ENCODE measurements at regions of chr19 and their contacts with region 1.

Region 1: GRCh38 chr19:15091901-15092753 is 10.1 kb downstream of the OR1I1 start:
- DNase-seq: peak in 2 of 5 donors; percentile 45 to 51
- H3K4me3 ChIP-seq: no peak overlapping the region
- H3K27ac ChIP-seq: no peak overlapping the region
- H3K4me1 ChIP-seq: no peaks in the 10 kb centered on the region
- H3K27me3 ChIP-seq: no peaks in the 10 kb centered on the region
- CTCF ChIP-seq: peak; percentile 23 to 70 (median 42)
- EP300 ChIP-seq: no peak
- POLR2A ChIP-seq: no peak

Region 2: GRCh38 chr19:15144036-15144646 is 52.0 kb after region 1 on chr19:
- intact Hi-C with region 1: loop called in 1 of 4 experiments (anchors 10 kb)
- DNase-seq: no peak
- H3K4me3 ChIP-seq: no peak overlapping the region
- H3K27ac ChIP-seq: no peak overlapping the region
- H3K4me1 ChIP-seq: no peaks in the 10 kb centered on the region
- H3K27me3 ChIP-seq: no peaks in the 10 kb centered on the region
- CTCF ChIP-seq: no peak
- EP300 ChIP-seq: no peak
- POLR2A ChIP-seq: no peak

Region 3: GRCh38 chr19:15154002-15154612 is 62.0 kb after region 1 on chr19:
- intact Hi-C with region 1: loop called (anchors 5 to 10 kb)
- DNase-seq: no peak
- H3K4me3 ChIP-seq: no peak overlapping the region
- H3K27ac ChIP-seq: no peak overlapping the region
- H3K4me1 ChIP-seq: no peaks in the 10 kb centered on the region
- H3K27me3 ChIP-seq: no peaks in the 10 kb centered on the region
- CTCF ChIP-seq: no peak
- EP300 ChIP-seq: no peak
- POLR2A ChIP-seq: no peak

Region 4: DNA sequence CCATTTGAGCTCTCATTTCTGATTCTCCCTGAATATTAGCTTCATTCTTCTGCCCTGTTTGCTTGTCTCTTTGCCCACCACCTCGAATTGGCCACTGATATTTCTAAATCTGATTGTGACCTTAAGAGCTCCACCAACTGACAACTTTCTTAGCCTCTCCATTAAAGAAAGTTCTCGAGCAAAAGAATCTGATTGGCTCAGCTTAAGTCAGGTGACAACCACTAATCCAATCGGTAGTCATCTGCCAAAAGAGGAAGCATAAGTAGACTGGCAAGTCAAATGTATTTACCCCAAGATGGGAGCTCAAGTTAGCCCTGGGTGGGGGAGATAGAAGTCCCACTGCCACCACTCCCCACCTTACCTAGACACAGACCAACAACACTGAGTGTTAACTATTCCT is 67.1 kb after region 1 on chr19:
- intact Hi-C with region 1: loop called in 3 of 4 experiments (anchors 5 kb)
- DNase-seq: no peak
- H3K4me3 ChIP-seq: no peak overlapping the region
- H3K27ac ChIP-seq: no peak overlapping the region
- H3K4me1 ChIP-seq: no peaks in the 10 kb centered on the region
- H3K27me3 ChIP-seq: no peaks in the 10 kb centered on the region
- CTCF ChIP-seq: no peak
- EP300 ChIP-seq: no peak
- POLR2A ChIP-seq: no peak

Region 5: GRCh38 chr19:15177269-15178116 is 85.4 kb after region 1 on chr19:
- intact Hi-C with region 1: no loop called
- DNase-seq: peak; percentile 58 to 87 (median 79)
- H3K4me3 ChIP-seq: no peak overlapping the region
- H3K27ac ChIP-seq: no peak overlapping the region
- H3K4me1 ChIP-seq: no peaks in the 10 kb centered on the region
- H3K27me3 ChIP-seq: no peaks in the 10 kb centered on the region
- CTCF ChIP-seq: peak; percentile 80 to 96 (median 96)
- EP300 ChIP-seq: no peak
- POLR2A ChIP-seq: no peak

Region 6: DNA sequence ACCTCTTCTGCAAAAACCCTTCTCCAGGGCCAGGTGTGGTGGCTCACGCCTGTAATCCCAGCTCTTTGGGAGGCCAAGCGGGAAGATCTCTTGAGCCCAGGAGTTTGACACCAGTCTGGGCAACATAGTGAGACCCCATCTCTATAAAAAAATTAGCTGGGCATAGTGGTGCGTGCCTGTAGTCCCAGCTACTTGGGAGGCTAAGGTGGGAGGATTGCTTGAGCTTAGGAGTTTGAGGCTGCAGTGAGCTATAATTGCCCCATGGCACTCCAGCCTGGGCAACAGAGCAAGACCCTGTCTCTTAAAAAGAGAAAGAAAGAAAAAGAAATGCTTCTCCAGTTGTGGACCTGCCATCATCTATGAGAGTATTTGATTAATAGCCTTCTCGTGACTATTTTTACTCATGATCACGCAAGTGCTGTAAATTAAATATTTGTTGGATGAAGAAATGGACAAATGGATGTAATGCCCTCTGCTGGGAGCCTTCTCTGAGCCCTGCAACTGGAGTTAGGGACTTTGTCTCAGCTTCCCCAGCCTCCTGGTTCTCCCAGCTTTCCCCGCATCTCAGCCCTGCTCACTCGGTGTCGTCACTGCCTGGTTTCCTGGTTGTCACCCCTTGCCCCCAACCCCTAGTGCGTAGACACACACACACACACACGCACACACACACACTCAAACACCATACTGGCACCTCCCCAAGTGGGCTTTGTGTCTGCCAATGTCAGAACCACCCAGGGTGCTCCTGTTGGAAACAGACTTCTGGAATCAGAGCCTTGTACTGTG is 345.4 kb after region 1 on chr19:
- intact Hi-C with region 1: no loop called
- DNase-seq: peak in 1 of 5 donors; percentile 19
- H3K4me3 ChIP-seq: no peak overlapping the region
- H3K27ac ChIP-seq: no peak overlapping the region
- H3K4me1 ChIP-seq: peaks cover 3% of the 10 kb centered on the region
- H3K27me3 ChIP-seq: no peaks in the 10 kb centered on the region
- CTCF ChIP-seq: no peak
- EP300 ChIP-seq: no peak
- POLR2A ChIP-seq: no peak